Pancreas (tissue), 10 donors: ENCODE measurements at regions of chr11 and their contacts with region 1.

Region 1: DNA sequence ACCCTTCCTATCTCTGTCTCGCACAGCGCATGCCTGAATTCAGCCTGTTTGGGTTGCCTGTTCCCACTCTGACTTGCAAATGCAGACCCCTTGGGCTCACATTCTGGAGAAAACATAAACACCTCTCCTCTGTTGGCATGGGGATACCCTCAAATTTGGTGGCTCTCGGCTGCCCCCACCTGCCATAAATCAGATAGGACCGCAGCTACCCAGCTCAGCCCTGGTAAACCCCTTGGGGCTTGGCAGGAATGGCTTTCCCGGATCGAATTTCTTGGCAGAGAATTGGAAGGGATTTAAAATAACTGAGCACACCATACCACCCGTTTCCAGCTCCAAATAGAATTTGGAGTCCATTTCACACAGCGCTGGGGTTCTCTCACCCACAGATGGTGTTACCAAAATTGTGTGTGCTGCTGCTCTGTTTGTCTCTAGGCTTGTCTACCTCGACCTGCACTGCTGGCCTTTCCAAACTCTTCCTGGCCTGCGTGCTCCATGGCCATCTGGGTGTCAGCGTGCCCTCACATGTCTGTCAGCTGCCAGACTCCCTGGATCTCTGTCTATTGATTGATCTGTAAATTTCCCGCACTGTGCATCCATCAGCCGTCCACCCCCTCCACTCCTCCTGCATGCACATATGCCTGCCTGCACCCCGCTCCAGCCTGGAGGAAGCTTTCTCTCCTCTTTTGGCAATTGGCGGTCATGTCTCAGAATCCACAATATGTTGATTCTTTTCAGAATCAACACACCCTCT is 134.0 kb downstream of the NTM start:
- DNase-seq: peak in 2 of 6 donors; percentile 26 to 55
- ATAC-seq: peak in 3 of 4 donors; percentile 75 to 96 (median 84)
- H3K4me3 ChIP-seq: no peak overlapping the region
- H3K27ac ChIP-seq: no peak overlapping the region
- H3K4me1 ChIP-seq: no peaks in the 10 kb centered on the region
- H3K27me3 ChIP-seq: no peaks in the 10 kb centered on the region
- CTCF ChIP-seq: peak in 2 of 4 donors; percentile 12 to 18

Region 2: GRCh38 chr11:131370090-131370751 is 134.2 kb before region 1 on chr11 and contains the start of gene NTM:
- intact Hi-C with region 1: no loop called
- DNase-seq: peak in 4 of 6 donors; percentile 57 to 71 (median 66)
- ATAC-seq: peak; percentile 94 to 99 (median 96)
- H3K4me3 ChIP-seq: peak within 1 kb of the TSS in 1 of 4 donors; percentile 13
- H3K27ac ChIP-seq: no peak within 1 kb of the TSS
- H3K4me1 ChIP-seq: peaks cover 7 to 12% (median 10%) of the 10 kb centered on the region in 3 donors
- H3K27me3 ChIP-seq: peaks cover 4 to 26% (median 9%) of the 10 kb centered on the region in 4 donors
- CTCF ChIP-seq: no peak
- total RNA-seq, gene NTM: 0.12 to 4.4 (median 0.67) TPM

Region 3: GRCh38 chr11:131411636-131412035 is 92.7 kb before region 1 on chr11:
- intact Hi-C with region 1: loop called in 1 of 3 experiments (anchors 5 kb)
- DNase-seq: peak in 1 of 6 donors; percentile 18
- ATAC-seq: no peak
- H3K4me3 ChIP-seq: no peak overlapping the region
- H3K27ac ChIP-seq: no peak overlapping the region
- H3K4me1 ChIP-seq: no peaks in the 10 kb centered on the region
- H3K27me3 ChIP-seq: no peaks in the 10 kb centered on the region
- CTCF ChIP-seq: no peak